Left ventricle myocardium superior (tissue), 1 donor: ENCODE measurements at regions of chr1 and their contacts with region 1.

Region 1: DNA sequence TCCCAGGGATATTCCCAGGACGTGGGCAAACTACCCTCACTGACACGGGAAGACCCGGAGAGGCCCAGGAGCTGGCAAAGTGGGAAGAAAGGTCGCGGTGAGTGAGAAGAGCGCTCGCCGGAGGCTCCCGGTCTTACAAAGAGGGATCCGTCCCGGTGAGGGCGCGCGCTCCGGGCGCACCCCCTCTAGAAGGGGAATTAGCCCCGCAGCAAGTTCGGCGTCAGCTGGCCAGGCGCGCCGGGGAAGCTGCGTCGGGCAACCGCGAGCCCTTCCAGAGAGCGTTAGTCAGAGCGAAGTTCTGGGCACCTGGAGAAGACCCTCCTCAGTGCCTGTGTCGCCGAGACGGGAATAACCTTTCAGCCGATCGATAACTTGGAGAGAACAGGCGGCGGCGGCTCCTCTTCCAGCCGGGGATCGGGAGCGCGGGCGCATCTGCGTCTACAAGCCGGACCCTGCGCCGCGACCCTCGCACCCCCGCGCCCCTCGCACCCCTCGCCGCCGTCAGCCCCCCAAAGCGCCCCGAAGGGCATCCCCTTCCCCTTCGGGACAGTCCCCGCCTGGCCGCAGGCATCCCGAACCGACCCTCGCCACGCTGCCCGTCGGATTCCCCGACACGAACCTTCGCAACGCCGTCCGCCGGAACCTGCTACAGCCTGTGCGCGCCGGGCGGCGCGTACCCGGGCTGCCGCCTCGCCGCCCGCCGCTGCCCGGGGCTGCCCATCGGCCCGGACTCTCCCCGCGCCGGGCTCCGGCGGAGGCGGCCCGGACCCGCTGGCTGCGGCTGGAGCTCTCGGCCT is 485 bp downstream of the SIPA1L2 start:
- DNase-seq: peak; percentile 71
- ATAC-seq: peak; percentile 8

Region 2: DNA sequence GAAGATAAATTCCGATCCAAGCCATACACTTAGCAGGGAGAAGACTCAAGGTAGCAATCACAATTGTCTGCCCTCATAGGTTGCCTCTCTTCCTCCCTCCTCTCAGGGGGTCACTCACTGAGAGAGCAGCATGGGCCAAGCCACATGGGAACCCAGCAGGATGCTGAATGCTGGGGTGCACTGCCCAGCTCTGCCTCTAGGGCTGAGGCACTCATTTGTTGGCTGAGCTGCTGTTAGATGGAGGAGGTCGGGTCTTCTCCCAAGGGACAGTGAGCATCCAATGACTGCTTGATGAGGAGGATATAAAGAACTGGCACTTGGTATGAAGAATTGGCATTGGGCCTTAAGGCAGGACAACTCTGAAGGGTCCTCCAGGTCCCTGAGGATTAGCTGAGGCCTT is 418.3 kb before region 1 on chr1:
- intact Hi-C with region 1: loop called (anchors 5 kb)
- DNase-seq: no peak
- ATAC-seq: no peak

Region 3: GRCh38 chr1:232435729-232436128 is 193.7 kb before region 1 on chr1:
- intact Hi-C with region 1: loop called (anchors 10 kb)
- DNase-seq: peak; percentile 50
- ATAC-seq: peak; percentile 41

Region 4: GRCh38 chr1:232486454-232487207 is 142.8 kb before region 1 on chr1:
- intact Hi-C with region 1: loop called (anchors 10 kb)
- DNase-seq: no peak
- ATAC-seq: peak; percentile 95

Region 5: GRCh38 chr1:232553050-232553754 is 76.2 kb before region 1 on chr1:
- intact Hi-C with region 1: loop called (anchors 10 kb)
- DNase-seq: peak; percentile 91
- ATAC-seq: peak; percentile 84

Region 6: DNA sequence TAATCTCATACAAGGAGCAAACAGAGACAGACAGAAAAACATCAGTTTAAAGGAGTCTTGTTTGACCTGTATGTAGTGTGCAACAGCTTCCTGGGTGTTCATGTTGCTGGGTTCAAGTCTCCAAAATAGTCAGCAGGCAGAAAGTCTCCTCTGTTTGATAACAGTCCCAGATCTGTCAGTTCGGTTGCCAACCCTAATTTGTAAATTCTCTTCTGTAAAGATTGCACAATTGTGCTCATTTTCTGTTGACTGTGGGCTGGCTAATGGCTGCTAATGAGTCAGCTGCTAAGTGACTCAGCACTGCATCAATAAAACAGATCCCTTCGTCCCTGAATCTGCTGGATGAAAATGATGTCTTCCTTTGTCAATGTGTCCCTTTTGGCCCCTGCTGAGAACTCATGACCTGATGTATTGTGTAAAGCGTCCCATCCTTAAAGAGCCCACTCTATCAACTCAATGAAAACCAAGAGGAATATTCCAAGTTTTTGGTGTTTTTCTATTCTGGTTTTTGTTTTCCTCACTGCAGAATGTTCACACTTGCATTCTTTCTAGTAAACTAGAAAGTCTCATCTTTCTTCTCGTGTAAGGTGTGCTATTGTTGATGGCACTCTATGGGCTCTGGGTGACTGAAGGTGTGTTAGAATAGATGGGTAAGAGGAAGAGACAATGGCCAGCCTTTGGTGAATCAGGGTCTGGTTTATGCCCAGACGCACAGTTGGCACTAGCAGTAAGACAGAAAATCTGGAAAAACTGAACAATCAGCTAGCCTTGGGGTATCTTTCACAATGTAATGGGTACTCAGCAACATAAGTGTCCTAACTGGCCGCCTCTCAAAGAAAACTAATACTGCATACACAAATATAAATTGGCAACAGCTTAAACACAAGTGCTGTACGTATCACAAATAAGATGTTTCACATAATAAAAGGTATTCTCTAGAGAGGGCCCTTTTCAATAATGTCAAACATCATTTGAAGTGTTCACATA is 75.5 kb after region 1 on chr1:
- intact Hi-C with region 1: no loop called
- DNase-seq: no peak
- ATAC-seq: peak; percentile 92